ENCODE measurements at regions of chr1 and their contacts with region 1.

Region 1: GRCh38 chr1:28668191-28668955 is at the start of gene GMEB1:
- DNase-seq: peak; percentile 83
- H3K4me3 Mint-ChIP-seq: peak within 1 kb of the TSS; percentile 93
- H3K27ac Mint-ChIP-seq: peak within 1 kb of the TSS; percentile 99
- H3K4me1 Mint-ChIP-seq: peaks cover 10% of the 10 kb centered on the region
- H3K27me3 Mint-ChIP-seq: no peaks in the 10 kb centered on the region
- total RNA-seq, gene GMEB1: 24.8 and 26.0 TPM in 2 replicates

Region 2: GRCh38 chr1:28259307-28260167 is 408.8 kb before region 1 on chr1 and contains the start of gene SESN2:
- intact Hi-C with region 1: loop called (anchors 10 kb)
- DNase-seq: peak; percentile 99
- H3K4me3 Mint-ChIP-seq: peak within 1 kb of the TSS; percentile 74
- H3K27ac Mint-ChIP-seq: peak within 1 kb of the TSS; percentile 88
- H3K4me1 Mint-ChIP-seq: peaks cover 38% of the 10 kb centered on the region
- H3K27me3 Mint-ChIP-seq: peaks cover 3% of the 10 kb centered on the region
- total RNA-seq, gene SESN2: 7.1 and 7.9 TPM in 2 replicates

Region 3: DNA sequence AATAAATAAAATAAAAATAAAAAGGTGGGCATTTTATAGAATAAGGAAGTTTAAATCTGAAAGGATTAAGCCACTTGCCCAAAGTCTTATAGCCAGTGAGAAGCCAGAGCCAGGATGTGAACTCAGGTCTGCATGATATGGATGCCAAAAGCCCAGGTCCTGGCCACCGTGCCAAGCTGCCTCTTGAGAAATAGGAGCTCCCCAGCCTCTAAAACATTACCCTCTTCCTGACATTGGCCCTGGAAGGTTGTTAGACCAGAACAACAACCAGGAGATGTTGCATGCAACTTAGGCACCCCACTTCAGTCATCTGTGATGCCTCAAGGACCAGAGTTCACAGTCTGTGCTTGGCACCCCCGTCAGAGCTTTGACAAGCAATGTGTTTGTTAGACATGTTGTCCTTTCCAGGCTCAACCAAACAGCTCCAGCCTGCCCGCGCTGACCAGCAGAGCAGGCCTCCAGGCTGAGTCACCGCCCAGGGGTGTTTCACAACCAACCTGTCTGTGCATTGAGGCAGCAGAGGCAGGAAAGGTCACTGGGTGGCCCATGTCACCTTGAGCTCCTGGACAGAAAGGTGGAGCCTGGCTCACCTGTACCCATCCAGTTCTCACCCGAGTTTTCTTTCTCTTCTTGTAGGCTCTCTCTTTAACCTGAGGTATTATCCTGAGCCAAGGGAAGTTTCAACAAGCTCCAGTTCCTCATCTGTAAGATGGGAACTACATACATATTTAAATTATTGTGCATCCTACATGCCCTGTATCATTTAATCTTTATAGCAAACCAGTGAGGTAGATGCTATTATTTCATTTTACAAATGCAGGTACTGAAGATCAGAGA is 354.4 kb before region 1 on chr1:
- intact Hi-C with region 1: no loop called
- DNase-seq: no peak
- H3K4me3 Mint-ChIP-seq: no peak overlapping the region
- H3K27ac Mint-ChIP-seq: no peak overlapping the region
- H3K4me1 Mint-ChIP-seq: no peaks in the 10 kb centered on the region
- H3K27me3 Mint-ChIP-seq: peaks cover 7% of the 10 kb centered on the region

Region 4: DNA sequence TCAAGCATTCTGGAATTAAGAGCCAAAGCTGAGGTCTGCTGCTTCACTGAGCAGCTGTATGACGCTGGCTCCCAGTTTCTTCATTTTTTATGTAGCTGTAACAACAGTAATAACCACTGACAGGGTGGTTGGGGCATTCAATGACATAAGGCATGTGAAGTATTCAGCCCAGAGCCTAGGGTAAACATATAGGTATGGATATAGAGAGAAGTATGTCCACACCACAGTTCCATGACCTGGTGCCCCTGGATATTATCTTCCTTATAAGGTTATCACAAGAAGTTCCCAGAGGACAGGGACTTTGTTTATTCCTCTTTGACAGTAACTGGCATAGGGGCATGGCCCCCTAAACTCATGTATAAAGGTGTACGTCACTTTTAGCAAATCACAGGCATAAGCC is 61.6 kb before region 1 on chr1:
- intact Hi-C with region 1: no loop called
- DNase-seq: no peak
- H3K4me3 Mint-ChIP-seq: no peak overlapping the region
- H3K27ac Mint-ChIP-seq: no peak overlapping the region
- H3K4me1 Mint-ChIP-seq: peaks cover 5% of the 10 kb centered on the region
- H3K27me3 Mint-ChIP-seq: no peaks in the 10 kb centered on the region

Region 5: GRCh38 chr1:28648474-28649198 is 19.7 kb before region 1 on chr1 and contains the start of gene RNU11:
- intact Hi-C with region 1: loop called (anchors 1 kb)
- DNase-seq: peak; percentile 84
- H3K4me3 Mint-ChIP-seq: peak within 1 kb of the TSS; percentile 81
- H3K27ac Mint-ChIP-seq: peak within 1 kb of the TSS; percentile 99
- H3K4me1 Mint-ChIP-seq: peaks cover 25% of the 10 kb centered on the region
- H3K27me3 Mint-ChIP-seq: no peaks in the 10 kb centered on the region
- total RNA-seq, gene RNU11: not detected in 2 replicates

Region 6: GRCh38 chr1:28682840-28683239 is 14.5 kb after region 1 on chr1:
- intact Hi-C with region 1: no loop called
- DNase-seq: no peak
- H3K4me3 Mint-ChIP-seq: no peak overlapping the region
- H3K27ac Mint-ChIP-seq: no peak overlapping the region
- H3K4me1 Mint-ChIP-seq: peaks cover 5% of the 10 kb centered on the region
- H3K27me3 Mint-ChIP-seq: no peaks in the 10 kb centered on the region

Measured in activated T-helper 2 cell treated with anti-CD3 and anti-CD28 coated beads, Interferon-gamma antibody, Interleukin-2, Interleukin-4, amounts not matched to agents 10 μg/mL and 5 μg/mL and 100 μg/mL, durations not matched to agents 14 hours and 24 hours and 36 hours (primary cell).